Activated T-helper 1 cell treated with anti-CD3 and anti-CD28 coated beads, Interleukin-12 subunit alpha, Interleukin-12 subunit beta, Interleukin-2, Interleukin-4 antibody, amounts not matched to agents 30 ng/mL and 10 ng/mL and 1 ng/mL, durations not matched to agents 14 hours and 24 hours and 36 hours (primary cell): ENCODE measurements at regions of chr6 and their contacts with region 1.

Region 1: GRCh38 chr6:29834564-29835436 is 7.2 kb downstream of the HLA-G start:
- DNase-seq: peak; percentile 12
- H3K4me3 Mint-ChIP-seq: no peak overlapping the region
- H3K27ac Mint-ChIP-seq: no peak overlapping the region
- H3K4me1 Mint-ChIP-seq: peaks cover 18% of the 10 kb centered on the region
- H3K27me3 Mint-ChIP-seq: peaks cover 64% of the 10 kb centered on the region

Region 2: DNA sequence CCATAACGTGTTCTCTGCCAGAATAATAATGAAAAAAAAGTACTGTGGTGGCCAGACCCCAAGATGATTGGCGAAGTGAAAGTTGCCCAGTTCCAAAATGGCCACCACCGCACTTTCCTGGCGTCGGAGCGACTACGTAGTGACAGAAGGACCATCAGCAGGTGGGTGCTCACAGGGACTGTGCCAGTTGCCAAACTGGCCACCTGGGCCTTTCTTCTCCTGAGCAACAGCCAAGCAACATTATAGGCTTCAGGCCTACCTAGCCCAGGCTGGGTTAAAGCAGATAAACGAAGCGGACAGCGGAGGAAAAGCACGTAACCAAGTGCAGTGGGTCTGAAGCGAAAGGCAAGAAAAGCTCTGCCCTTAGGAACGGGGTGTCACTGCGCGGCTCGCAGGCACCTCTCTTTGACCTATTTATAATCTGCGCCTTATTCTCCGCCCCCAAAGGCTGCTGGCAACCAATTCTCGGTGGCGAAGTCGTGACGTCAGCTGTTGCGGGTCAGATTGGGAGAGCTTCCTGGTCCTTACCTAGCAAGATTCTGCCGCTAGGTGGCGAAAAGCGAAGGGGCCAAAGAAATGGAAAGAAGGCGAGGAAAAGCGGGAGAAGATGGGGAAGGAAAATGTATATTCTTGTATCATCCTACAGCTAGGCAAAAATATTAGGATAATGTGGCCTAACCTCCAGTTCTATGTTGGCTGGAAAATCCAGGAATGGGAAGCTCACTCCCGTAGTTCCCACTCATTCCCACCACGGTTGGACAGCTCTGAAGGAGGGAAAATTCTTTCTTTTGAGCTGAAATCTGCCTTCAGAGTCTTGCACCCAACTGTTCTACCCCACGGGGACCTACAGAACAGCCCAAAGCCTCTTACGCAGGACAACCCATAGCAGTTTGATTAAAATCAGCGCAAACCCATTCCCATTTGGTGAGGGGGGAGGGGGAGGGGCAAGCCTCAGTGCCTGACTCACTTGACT is 184.8 kb before region 1 on chr6:
- intact Hi-C with region 1: loop called (anchors 2 kb)
- DNase-seq: peak; percentile 95
- H3K4me3 Mint-ChIP-seq: peak overlapping the region; percentile 89
- H3K27ac Mint-ChIP-seq: peak overlapping the region; percentile 98
- H3K4me1 Mint-ChIP-seq: peaks cover 20% of the 10 kb centered on the region
- H3K27me3 Mint-ChIP-seq: peaks cover 5% of the 10 kb centered on the region

Region 3: GRCh38 chr6:29676981-29677601 is 157.7 kb before region 1 on chr6:
- intact Hi-C with region 1: no loop called
- DNase-seq: no peak
- H3K4me3 Mint-ChIP-seq: no peak overlapping the region
- H3K27ac Mint-ChIP-seq: no peak overlapping the region
- H3K4me1 Mint-ChIP-seq: peaks cover 8% of the 10 kb centered on the region
- H3K27me3 Mint-ChIP-seq: no peaks in the 10 kb centered on the region

Region 4: GRCh38 chr6:29705389-29706231 is 129.2 kb before region 1 on chr6:
- intact Hi-C with region 1: loop called (anchors 1 kb)
- DNase-seq: no peak
- H3K4me3 Mint-ChIP-seq: no peak overlapping the region
- H3K27ac Mint-ChIP-seq: no peak overlapping the region
- H3K4me1 Mint-ChIP-seq: peaks cover 60% of the 10 kb centered on the region
- H3K27me3 Mint-ChIP-seq: peaks cover 30% of the 10 kb centered on the region

Region 5: DNA sequence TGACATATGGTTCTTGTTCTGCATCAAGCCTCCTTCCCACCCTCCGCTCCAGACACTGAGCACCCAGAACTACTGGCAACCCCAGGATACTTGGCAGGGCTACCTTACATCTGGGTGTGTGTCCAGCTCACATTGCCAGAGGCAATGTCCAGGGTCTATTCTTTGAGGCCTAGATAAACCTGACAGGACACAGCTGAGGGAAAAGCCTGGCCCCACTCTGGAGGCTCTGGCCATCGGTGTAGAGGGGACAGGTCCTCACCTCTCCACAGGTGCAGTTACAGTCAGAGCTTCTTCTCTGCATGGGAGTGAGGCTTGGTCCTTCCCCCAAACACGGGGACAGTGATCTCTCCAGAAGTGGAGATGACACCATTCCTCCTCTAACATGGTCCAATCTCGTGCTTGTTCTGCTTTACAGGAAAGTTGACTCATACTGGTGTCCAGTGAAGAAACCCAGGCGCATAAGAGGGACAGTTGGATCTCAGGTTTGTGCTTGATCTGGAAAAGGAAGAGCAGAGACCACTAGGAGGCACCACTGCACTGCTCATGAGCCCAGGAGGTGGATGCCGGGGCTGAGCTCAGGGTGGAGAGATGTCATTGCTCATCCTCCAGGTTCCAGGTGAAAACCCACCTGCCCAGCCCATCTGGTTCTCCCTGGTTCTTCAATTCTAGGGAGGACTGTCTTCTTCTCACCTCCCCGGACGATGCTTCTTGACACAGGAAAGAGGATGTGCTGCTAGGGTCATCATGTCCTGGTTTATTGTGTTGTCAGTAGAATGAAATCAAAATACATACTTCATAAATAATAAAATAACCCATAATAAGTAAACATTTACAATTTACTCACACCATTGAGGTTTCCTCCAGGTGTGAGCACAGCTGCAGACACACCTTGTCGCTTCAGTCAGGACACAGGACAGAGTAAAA is 96.8 kb before region 1 on chr6:
- intact Hi-C with region 1: loop called (anchors 1 kb)
- DNase-seq: peak; percentile 63
- H3K4me3 Mint-ChIP-seq: no peak overlapping the region
- H3K27ac Mint-ChIP-seq: no peak overlapping the region
- H3K4me1 Mint-ChIP-seq: peaks cover 12% of the 10 kb centered on the region
- H3K27me3 Mint-ChIP-seq: no peaks in the 10 kb centered on the region

Region 6: GRCh38 chr6:29917857-29918256 is 83.1 kb after region 1 on chr6:
- intact Hi-C with region 1: no loop called
- DNase-seq: no peak
- H3K4me3 Mint-ChIP-seq: no peak overlapping the region
- H3K27ac Mint-ChIP-seq: no peak overlapping the region
- H3K4me1 Mint-ChIP-seq: no peaks in the 10 kb centered on the region
- H3K27me3 Mint-ChIP-seq: peaks cover 21% of the 10 kb centered on the region